ENCODE measurements at regions of chr6 and their contacts with region 1.

Region 1: GRCh38 chr6:31665501-31666336 is at the start of gene CSNK2B:
- DNase-seq: peak; percentile 87 to 99 (median 98)
- ATAC-seq: peak; percentile 94
- H3K4me3 ChIP-seq: peak within 1 kb of the TSS; percentile 91
- H3K4me3 Mint-ChIP-seq: peak within 1 kb of the TSS; percentile 93 to 99 (median 96)
- H3K27ac ChIP-seq: peak within 1 kb of the TSS; percentile 97
- H3K27ac Mint-ChIP-seq: peak within 1 kb of the TSS; percentile 94 to 99 (median 98)
- H3K4me1 ChIP-seq: peaks cover 33 to 43% of the 10 kb centered on the region in 2 donors
- H3K4me1 Mint-ChIP-seq: peaks cover 25 to 75% (median 64%) of the 10 kb centered on the region in 7 donors
- H3K27me3 ChIP-seq: no peaks in the 10 kb centered on the region
- H3K27me3 Mint-ChIP-seq: peaks cover 0 to 2% (median 0%) of the 10 kb centered on the region in 5 donors
- total RNA-seq, gene CSNK2B: 101 to 215 (median 133) TPM

Region 2: DNA sequence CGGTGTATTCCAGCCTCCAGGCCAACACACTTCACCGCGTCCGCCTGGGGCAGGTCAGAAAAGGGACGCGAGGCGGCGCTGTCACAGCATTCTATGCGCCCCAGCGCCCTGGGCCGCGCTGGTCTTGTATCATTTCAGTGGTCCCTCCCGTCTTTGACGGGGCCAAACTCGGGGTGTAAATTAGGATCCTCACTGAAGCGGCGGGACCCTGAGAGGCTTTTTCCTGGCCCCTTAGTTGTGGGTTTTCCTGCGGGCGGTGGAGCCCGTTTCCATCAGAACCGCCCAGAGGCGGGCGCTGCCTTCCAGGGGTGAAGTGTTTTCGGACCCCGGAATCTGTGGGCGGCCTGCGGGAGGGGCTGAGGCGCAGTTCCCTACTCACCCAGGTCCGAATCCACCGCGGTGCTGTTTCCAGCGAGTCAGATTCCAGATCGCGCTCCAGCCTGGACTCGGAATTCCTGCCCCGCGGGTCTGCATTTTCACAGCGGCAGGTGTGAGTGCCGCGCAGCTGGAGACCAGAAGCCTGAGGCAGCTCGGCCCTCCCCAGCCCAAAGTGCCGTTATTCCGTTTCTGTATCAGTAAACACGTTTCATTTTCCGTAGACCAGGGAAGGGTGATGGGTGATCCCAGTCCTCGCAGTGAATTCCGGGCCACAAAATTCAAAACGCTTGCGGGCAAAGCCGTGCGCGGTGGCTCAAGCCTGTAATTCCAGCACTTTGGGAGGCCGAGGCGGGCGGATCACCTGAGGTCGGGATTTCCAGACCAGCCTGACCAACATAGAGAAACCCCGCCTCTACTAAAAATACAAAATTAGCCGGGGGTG is 171.6 kb before region 1 on chr6:
- CTCF ChIA-PET with region 1: no interaction called
- POLR2A ChIA-PET with region 1: no interaction called
- intact Hi-C with region 1: loop called in 1 of 2 experiments (anchors 5 kb)
- DNase-seq: peak; percentile 33 to 78 (median 62)
- ATAC-seq: peak; percentile 65
- H3K4me3 ChIP-seq: peak overlapping the region; percentile 87
- H3K4me3 Mint-ChIP-seq: peak overlapping the region; percentile 78 to 93 (median 88)
- H3K27ac ChIP-seq: peak overlapping the region; percentile 81
- H3K27ac Mint-ChIP-seq: peak overlapping the region; percentile 36 to 98 (median 87)
- H3K4me1 ChIP-seq: peaks cover 17 to 24% of the 10 kb centered on the region in 2 donors
- H3K4me1 Mint-ChIP-seq: peaks cover 41 to 61% (median 50%) of the 10 kb centered on the region in 7 donors
- H3K27me3 ChIP-seq: no peaks in the 10 kb centered on the region
- H3K27me3 Mint-ChIP-seq: no peaks in the 10 kb centered on the region

Region 3: DNA sequence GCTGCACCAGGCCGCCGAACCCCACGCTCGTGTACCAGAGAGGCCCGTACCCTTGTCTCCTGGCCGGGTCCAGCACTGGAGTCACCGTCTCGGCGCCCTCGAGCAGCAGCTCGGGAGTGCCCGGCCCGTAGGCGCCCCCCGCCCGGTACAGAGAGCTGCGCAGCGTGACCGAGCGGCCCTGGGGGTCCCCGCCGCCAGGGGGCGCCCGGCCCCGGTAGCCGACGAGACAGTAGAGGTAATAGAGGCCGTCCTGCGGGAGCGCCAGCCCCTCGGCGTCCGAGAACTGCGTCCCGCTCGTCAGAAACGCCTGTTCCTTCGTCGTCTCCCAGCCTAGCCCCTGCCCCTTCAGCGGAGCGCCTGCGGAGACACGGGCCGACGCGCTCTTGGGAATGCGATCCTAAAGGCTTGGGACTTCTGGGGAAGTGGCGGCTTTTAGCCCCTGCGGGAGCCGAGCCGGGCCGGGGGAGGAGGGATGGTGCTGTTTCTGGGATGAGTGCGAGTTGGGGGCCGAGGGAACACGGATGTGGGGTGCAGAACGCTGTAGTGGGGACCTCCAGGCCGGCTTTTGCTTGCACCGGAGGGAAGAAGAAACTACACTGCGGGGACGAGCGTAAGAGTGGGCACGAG is 84.8 kb before region 1 on chr6:
- CTCF ChIA-PET with region 1: interaction called, 3 read pairs
- POLR2A ChIA-PET with region 1: interaction called, 12 read pairs
- intact Hi-C with region 1: no loop called
- DNase-seq: peak; percentile 79 to 96 (median 88)
- ATAC-seq: peak; percentile 87
- H3K4me3 ChIP-seq: peak overlapping the region; percentile 97
- H3K4me3 Mint-ChIP-seq: peak overlapping the region; percentile 88 to 100 (median 99)
- H3K27ac ChIP-seq: peak overlapping the region; percentile 97
- H3K27ac Mint-ChIP-seq: peak overlapping the region; percentile 94 to 100 (median 97)
- H3K4me1 ChIP-seq: peaks cover 54 to 60% of the 10 kb centered on the region in 2 donors
- H3K4me1 Mint-ChIP-seq: peaks cover 47 to 80% (median 63%) of the 10 kb centered on the region in 7 donors
- H3K27me3 ChIP-seq: no peaks in the 10 kb centered on the region
- H3K27me3 Mint-ChIP-seq: no peaks in the 10 kb centered on the region

Region 4: DNA sequence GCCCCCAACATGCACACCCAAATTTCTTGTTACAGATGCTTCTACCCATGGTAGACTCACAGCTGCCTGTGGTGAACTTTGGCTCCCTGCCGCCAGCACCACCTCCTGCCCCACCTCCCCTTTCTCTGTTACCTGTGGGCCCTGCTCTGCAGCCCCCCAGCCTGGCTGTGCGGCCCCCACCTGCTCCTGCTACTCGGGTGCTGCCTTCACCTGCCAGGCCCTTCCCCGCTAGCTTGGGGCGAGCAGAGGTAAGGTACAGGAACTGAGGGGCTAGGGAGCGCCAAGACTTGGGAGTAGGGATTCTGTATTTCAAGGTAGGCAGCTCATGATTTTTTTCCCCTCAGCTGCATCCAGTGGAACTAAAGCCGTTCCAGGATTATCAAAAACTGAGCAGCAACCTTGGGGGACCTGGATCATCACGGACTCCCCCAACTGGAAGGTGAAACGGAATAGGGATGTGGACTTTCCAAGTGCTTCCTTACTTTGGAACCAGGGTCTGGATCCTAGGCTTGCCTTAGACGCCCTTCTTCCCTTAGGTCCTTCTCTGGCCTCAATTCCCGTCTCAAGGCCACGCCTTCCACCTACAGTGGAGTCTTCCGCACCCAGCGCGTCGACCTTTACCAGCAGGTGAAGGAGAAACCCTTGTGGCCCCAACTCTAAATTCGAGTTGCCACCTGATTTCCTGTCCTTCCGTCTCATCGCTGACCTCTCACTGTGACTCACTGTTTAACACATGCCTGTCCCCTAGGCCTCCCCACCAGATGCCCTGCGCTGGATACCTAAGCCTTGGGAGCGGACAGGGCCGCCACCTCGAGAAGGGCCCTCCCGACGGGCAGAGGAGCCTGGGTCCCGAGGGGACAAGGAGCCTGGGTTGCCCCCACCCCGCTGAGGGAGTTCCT is 28.8 kb before region 1 on chr6:
- CTCF ChIA-PET with region 1: no interaction called
- POLR2A ChIA-PET with region 1: no interaction called
- intact Hi-C with region 1: no loop called
- DNase-seq: no peak
- ATAC-seq: no peak
- H3K4me3 ChIP-seq: no peak overlapping the region
- H3K4me3 Mint-ChIP-seq: no peak overlapping the region
- H3K27ac ChIP-seq: no peak overlapping the region
- H3K27ac Mint-ChIP-seq: peak overlapping the region in 4 of 9 donors; percentile 51 to 56 (median 54)
- H3K4me1 ChIP-seq: no peaks in the 10 kb centered on the region
- H3K4me1 Mint-ChIP-seq: peaks cover 0 to 10% (median 0%) of the 10 kb centered on the region in 7 donors
- H3K27me3 ChIP-seq: no peaks in the 10 kb centered on the region
- H3K27me3 Mint-ChIP-seq: no peaks in the 10 kb centered on the region

Region 5: GRCh38 chr6:31795616-31796298 is 130.0 kb after region 1 on chr6 and contains the start of gene VARS1:
- CTCF ChIA-PET with region 1: no interaction called
- POLR2A ChIA-PET with region 1: no interaction called
- intact Hi-C with region 1: loop called (anchors 1 to 5 kb)
- DNase-seq: peak; percentile 75 to 92 (median 85)
- ATAC-seq: peak; percentile 96
- H3K4me3 ChIP-seq: peak within 1 kb of the TSS; percentile 76
- H3K4me3 Mint-ChIP-seq: peak within 1 kb of the TSS; percentile 85 to 99 (median 96)
- H3K27ac ChIP-seq: peak within 1 kb of the TSS; percentile 93
- H3K27ac Mint-ChIP-seq: peak within 1 kb of the TSS; percentile 80 to 99 (median 98)
- H3K4me1 ChIP-seq: peaks cover 24 to 32% of the 10 kb centered on the region in 2 donors
- H3K4me1 Mint-ChIP-seq: peaks cover 12 to 55% (median 36%) of the 10 kb centered on the region in 7 donors
- H3K27me3 ChIP-seq: no peaks in the 10 kb centered on the region
- H3K27me3 Mint-ChIP-seq: no peaks in the 10 kb centered on the region
- total RNA-seq, gene VARS1: 34.3 to 84.2 (median 53.2) TPM

Region 6: DNA sequence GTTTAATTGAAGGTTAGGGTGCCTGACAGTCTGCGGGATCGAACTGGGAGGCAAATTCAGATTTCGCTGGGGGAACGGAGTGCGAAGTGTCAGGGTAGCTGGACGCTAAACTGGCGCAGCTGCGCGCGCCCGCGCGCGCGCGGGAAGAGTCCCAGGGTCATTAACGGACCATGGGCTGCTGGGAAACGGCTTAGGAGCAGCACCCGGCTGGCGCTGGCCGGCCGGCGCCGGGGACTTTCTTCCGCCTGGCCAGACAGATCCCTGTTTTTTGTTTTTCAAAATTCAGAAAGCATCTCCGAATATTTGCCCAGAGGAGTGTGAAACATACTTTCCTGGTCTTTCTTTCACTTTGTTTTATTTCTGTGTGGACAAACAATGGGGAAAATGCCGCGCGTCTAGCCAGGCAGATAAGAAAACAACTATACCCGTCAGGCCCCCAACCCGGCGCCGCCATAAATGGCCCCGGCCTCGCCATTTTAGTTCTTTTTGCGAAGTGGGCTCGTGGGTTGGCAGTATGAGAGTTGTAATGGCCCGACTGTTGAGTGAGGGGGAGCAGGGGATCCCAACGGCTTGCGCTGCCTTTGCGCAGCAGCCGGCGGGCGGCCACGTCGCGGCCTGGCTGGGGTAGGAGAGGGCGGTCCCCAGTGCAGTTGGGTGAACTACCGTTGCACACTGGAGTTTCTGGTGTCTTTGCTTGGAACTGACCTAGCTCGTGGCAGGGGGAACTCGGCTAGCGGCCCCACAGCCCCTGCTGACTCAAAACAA is 168.9 kb after region 1 on chr6:
- CTCF ChIA-PET with region 1: no interaction called
- POLR2A ChIA-PET with region 1: interaction called, 10 read pairs
- intact Hi-C with region 1: loop called (anchors 1 to 2 kb)
- DNase-seq: peak; percentile 77 to 84 (median 82)
- ATAC-seq: peak; percentile 82
- H3K4me3 ChIP-seq: peak overlapping the region; percentile 73
- H3K4me3 Mint-ChIP-seq: peak overlapping the region; percentile 84 to 99 (median 99)
- H3K27ac ChIP-seq: peak overlapping the region; percentile 92
- H3K27ac Mint-ChIP-seq: peak overlapping the region; percentile 91 to 100 (median 99)
- H3K4me1 ChIP-seq: peaks cover 40 to 48% of the 10 kb centered on the region in 2 donors
- H3K4me1 Mint-ChIP-seq: peaks cover 31 to 64% (median 53%) of the 10 kb centered on the region in 7 donors
- H3K27me3 ChIP-seq: no peaks in the 10 kb centered on the region
- H3K27me3 Mint-ChIP-seq: no peaks in the 10 kb centered on the region

Region 7: DNA sequence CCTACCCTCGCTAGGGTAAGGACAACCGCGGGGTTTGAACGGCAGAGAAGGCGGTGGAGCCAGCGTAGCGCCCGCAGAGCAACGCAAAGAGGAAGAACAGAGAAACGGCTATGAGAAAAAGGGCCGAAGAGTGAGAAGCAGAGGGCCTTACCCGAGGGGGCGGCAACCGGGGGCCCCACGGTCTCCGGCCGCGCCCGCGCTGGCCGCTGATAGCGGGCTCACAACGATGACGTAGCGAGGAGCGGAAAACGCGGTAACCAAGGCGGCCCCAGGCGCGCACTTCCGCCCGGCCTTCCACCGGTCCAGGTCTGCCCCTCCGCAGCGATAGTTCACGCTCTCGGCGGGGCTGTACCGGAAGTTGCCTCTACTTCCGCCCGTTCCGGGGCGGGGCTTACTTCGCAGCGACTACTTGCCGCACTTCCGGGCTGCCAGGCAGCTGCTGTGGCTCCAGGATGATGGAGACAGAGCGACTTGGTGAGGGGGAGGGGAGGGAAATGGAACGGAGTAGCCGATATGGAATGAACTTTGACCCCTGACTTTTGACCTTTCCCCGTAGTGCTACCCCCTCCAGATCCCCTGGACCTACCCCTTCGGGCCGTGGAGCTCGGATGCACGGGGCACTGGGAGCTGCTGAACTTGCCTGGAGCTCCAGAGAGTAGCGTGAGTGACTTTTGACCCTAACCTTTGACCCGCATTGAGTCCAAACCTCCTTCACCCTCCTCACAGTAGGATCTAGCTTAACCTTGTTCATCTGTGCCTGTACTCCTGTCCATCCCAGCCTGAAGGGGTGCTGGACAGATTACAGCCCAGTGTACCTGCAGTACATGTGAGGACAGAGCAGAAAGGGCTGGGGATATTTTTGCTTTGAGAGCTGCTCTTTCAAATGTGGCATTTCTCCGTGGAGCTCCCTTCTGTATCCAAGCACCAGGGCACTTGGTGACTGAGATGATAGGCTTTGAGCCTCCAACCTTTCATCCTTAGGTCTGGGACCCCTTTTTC is 293.3 kb after region 1 on chr6 and contains the starts of genes NELFE and SKIC2:
- CTCF ChIA-PET with region 1: no interaction called
- POLR2A ChIA-PET with region 1: interaction called, 3 read pairs
- intact Hi-C with region 1: loop called (anchors 1 to 5 kb)
- DNase-seq: peak; percentile 94 to 99 (median 98)
- ATAC-seq: peak; percentile 98
- H3K4me3 ChIP-seq: peak within 1 kb of the TSS; percentile 89
- H3K4me3 Mint-ChIP-seq: peak within 1 kb of the TSS; percentile 91 to 100 (median 97)
- H3K27ac ChIP-seq: peak within 1 kb of the TSS; percentile 99
- H3K27ac Mint-ChIP-seq: peak within 1 kb of the TSS; percentile 91 to 99 (median 97)
- H3K4me1 ChIP-seq: peaks cover 18 to 20% of the 10 kb centered on the region in 2 donors
- H3K4me1 Mint-ChIP-seq: peaks cover 23 to 50% (median 39%) of the 10 kb centered on the region in 7 donors
- H3K27me3 ChIP-seq: no peaks in the 10 kb centered on the region
- H3K27me3 Mint-ChIP-seq: no peaks in the 10 kb centered on the region
- total RNA-seq, gene NELFE: 47.5 to 71.7 (median 59.1) TPM
- total RNA-seq, gene SKIC2: 85.6 to 139 (median 101) TPM

Measured in naive thymus-derived CD4-positive, alpha-beta T cell (primary cell).